ENCODE measurements at regions of chrX and their contacts with region 1.

Region 1: DNA sequence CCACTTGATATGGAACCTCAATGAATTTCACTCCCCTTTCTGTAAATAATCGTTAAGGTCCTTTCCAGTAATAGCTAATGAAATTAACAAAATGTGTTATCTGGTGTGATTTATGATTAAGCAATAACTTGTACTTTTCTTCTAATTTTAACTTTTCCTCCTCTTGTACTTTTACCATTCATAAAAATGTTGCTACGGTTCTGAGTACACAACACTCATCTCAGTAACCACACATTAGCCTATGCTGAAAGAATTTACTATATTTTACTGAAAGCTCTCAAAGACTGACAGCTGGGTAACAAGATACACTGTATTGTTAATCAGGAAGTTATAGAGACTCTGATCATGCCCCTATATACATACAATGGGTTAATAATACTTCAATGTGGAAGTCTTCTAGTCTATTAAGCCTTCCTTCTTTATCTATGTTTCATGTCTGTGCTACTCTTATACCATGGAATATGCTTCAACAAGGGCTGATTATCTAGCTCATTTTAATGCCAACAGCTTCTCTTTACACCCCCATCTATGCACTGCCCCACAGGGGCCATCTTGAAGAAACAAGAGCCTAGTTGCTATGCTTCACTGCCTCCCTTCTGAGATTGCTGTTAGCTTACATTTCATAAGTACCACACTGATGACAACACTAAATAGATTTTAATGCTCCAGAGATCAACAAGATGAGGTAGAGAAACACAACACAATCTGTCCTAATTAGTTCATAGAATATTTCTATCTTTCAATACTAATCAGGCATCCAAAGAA is 39.1 kb downstream of the LAMP2 start:
- DNase-seq: no peak
- H3K4me3 Mint-ChIP-seq: no peak overlapping the region
- H3K27ac Mint-ChIP-seq: no peak overlapping the region
- H3K4me1 Mint-ChIP-seq: peaks cover 6% of the 10 kb centered on the region
- H3K27me3 Mint-ChIP-seq: peaks cover 59% of the 10 kb centered on the region
- CTCF ChIP-seq: no peak

Region 2: DNA sequence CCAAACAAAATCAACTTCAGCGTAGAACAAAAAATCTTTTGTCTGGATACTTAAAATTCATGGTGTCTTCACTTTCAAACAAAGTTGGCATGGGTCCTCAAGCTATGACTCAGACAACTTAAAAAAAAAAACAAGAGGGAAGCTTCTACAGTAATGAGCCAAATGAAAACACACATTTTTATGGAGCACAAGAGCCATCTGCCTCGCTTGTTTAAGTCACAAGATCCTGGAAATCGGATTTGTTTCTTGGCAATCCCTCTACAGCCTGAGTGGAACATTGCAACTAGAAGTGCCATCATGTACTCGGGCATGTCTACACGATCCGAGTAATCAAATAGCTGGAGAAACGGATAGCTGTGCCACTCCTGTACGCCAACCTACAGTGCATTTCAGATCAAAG is 16.5 kb after region 1 on chrX:
- CTCF ChIA-PET with region 1: interaction called, 11 read pairs
- POLR2A ChIA-PET with region 1: no interaction called
- intact Hi-C with region 1: no loop called
- DNase-seq: peak; percentile 67
- H3K4me3 Mint-ChIP-seq: no peak overlapping the region
- H3K27ac Mint-ChIP-seq: no peak overlapping the region
- H3K4me1 Mint-ChIP-seq: no peaks in the 10 kb centered on the region
- H3K27me3 Mint-ChIP-seq: peaks cover 36% of the 10 kb centered on the region
- CTCF ChIP-seq: no peak

Region 3: GRCh38 chrX:121028423-121028822 is 598.5 kb after region 1 on chrX:
- CTCF ChIA-PET with region 1: no interaction called
- POLR2A ChIA-PET with region 1: no interaction called
- intact Hi-C with region 1: no loop called
- DNase-seq: peak; percentile 13
- H3K4me3 Mint-ChIP-seq: no peak overlapping the region
- H3K27ac Mint-ChIP-seq: no peak overlapping the region
- H3K4me1 Mint-ChIP-seq: no peaks in the 10 kb centered on the region
- H3K27me3 Mint-ChIP-seq: no peaks in the 10 kb centered on the region
- CTCF ChIP-seq: no peak

Measured in MCF 10A (cell line).